GM10248 (cell line): ENCODE measurements at regions of chr18 and their contacts with region 1.

Region 1: DNA sequence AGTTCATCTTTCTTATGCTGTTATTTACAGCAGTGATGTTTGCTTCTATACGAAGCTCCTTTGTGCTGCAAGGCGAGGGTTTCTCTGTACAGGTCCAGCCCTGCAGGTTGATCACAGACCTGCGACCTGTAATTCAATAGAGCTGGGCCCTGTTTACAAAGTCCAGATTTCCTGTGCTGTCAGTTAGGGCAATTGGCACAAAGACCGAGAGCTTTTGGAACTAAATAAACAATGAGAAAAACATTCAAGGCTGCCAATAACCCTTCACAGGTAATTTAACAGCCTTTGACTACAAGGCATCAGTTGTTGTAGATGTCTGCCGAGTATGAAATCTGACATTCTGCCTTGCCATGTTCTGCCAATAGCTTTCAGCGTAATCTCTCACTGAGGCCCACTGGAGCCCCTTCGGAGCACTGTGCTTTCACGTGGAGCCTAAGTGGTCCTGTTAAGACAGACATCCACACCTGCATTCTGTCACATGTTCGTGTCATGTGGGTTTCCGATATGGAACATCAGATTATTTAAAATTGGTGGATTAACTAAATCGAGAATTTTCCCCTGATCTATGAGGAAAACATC is 232.5 kb downstream of the PTGR3 start:
- DNase-seq: no peak
- CTCF ChIP-seq: no peak

Region 2: DNA sequence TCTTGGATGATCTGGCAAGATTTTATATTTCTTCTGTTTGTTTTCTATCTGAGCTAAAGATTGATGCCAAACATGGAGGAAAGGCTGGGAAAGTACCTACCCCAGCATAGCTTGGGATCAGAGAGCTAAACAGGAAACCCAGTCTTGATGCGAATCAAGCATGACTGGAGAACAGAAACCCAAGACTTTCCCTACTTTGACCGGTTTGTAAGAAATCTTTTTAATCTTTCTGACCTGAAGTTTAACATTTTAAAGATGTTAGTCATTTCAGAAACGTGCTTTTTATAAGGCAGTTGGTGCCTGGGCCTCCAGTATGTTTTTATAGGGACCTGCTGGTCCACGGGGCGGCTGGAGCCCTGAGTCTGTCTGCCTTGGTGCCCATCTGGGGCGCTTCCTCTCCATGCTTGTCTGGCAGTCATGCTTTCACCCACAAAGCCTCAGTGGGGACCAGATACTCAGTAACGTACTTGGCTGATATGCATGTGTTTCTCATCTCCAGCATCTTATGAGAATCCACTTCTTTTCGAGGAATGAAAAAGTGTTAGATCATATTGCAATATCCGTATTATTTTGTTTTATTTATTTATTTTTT is 34.0 kb before region 1 on chr18:
- CTCF ChIA-PET with region 1: no interaction called
- POLR2A ChIA-PET with region 1: no interaction called
- DNase-seq: peak; percentile 31
- CTCF ChIP-seq: no peak

Region 3: GRCh38 chr18:74963820-74964446 is 12.5 kb before region 1 on chr18:
- CTCF ChIA-PET with region 1: interaction called, 12 read pairs
- POLR2A ChIA-PET with region 1: no interaction called
- DNase-seq: peak; percentile 38
- CTCF ChIP-seq: peak; percentile 46

Region 4: DNA sequence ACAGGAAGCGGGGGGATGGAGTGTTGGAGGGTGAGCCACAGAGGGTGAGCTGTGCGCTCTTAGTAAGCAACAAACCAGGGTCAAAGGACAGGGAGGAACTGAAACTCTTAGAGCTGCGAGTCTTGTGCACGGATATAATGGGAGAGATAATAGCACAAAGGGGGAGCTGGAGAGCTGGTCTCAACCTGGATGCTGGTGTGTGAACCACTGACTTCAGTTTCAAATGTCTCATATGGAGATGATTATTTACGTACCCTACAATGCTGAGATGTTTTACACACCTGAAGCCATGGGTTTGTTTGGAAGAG is 196.7 kb after region 1 on chr18:
- CTCF ChIA-PET with region 1: no interaction called
- POLR2A ChIA-PET with region 1: no interaction called
- DNase-seq: peak; percentile 85
- CTCF ChIP-seq: peak; percentile 31